Prostate gland (tissue), 2 donors: ENCODE measurements at regions of chr16 and their contacts with region 1.

Region 1: DNA sequence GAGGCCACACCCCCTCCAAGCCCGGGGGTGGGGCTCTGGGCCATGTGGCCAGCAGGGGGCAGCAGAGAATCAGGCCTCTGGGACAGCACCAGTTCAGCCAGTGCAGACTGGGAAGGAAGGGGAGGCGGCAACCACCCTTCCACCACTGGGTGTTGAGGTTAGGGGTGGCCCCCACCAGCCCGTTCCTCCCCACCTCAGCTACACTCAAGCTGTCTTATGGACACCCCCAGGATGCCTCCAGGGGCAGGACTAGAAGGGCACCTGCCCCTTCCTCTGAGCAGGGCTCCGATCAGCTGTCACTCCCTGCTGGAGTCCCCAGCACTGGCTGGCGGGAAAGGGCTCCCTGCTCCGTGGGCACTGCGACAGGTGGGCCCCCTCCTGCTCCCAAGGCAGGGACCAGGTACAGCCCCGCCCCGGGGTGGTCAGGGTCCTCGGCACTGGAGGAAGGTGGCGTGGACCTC is 21.8 kb downstream of the KATNB1 start:
- DNase-seq: peak; percentile 82
- H3K4me3 ChIP-seq: no peak overlapping the region
- H3K27ac ChIP-seq: no peak overlapping the region
- H3K4me1 ChIP-seq: no peaks in the 10 kb centered on the region
- H3K27me3 ChIP-seq: no peaks in the 10 kb centered on the region
- CTCF ChIP-seq: peak; percentile 76 to 96 (median 90)
- POLR2A ChIP-seq: no peak

Region 2: DNA sequence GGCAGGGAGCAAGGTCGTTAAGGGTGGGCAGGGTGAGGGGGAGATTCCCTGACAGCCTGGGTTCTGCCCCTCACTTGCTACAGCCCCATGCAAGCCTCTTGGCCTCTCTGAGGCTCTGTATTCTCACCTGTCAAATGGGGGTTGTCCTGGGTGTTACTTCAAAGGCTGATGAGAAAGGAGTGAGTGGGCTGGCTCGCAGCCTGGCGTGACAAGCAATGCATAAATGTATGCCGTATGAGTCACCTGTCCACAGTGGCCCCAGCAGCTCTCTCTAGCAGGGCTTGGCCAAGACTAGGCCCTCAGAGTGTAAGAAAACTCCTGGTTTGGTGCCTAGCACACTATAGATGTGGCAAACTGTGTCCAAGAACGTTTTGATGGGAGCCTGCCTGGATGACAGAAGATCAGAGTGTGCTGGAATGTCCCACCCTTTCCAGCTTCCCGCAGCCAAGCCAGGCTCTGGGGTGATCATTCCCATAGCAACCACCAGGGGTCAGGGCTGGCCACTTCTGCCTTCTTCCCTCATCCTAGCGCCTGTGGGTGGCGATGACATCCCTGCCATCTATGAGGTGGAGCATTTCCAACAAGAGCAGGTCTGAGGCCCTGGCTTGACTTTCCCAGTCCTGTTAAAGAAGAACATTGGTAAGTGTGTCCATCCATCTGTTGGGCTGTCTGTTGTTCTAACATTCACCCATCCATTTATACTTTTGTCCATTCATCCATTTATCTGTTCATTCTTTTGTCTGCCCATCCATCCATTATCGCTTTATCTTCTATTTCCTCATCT is 166.1 kb before region 1 on chr16:
- intact Hi-C with region 1: loop called (anchors 10 kb)
- DNase-seq: peak; percentile 59
- H3K4me3 ChIP-seq: no peak overlapping the region
- H3K27ac ChIP-seq: no peak overlapping the region
- H3K4me1 ChIP-seq: no peaks in the 10 kb centered on the region
- H3K27me3 ChIP-seq: no peaks in the 10 kb centered on the region
- CTCF ChIP-seq: peak; percentile 47 to 93 (median 84)
- POLR2A ChIP-seq: no peak

Region 3: DNA sequence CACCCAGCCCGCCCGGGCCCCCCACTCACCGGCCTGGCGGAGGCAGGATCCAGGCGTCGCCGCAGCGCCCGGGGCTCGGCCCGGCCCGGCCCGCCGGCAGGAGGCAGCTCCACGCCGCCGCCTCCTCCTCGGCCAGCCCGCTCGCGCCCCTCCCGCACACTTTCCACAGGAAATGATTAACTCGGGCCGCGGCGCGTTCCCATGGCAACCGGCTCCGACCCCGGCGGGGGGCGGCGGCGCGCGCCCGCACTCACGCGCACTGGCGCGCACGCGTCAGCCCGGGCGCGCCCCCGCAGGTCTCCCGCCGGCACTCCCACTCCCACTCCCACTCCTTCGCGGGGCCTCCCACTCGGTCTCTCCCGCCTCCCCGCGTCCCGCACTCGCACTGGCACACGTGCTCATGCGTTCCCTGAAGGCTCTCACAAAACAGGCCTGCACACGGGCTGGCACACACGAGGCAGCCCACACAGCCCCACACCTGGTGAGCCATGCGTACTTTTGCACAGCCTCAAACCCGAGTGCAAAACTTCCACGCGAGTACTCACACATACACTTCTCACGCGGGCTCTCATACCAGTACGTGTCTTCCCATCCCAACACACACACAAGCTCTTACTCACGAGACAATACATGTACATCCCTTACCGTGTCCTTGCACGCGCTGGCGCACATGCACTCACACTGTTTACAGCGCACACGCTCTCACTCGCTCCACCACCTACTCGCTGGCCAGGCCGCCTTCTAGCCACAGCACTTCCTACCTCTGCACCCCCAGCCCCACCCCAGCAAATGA is 45.2 kb after region 1 on chr16 and contains the start of gene KIFC3:
- intact Hi-C with region 1: loop called (anchors 5 kb)
- DNase-seq: peak; percentile 52
- H3K4me3 ChIP-seq: peak within 1 kb of the TSS; percentile 43 to 47
- H3K27ac ChIP-seq: peak within 1 kb of the TSS; percentile 75 to 77
- H3K4me1 ChIP-seq: no peaks in the 10 kb centered on the region
- H3K27me3 ChIP-seq: no peaks in the 10 kb centered on the region
- CTCF ChIP-seq: peak in 2 of 4 experiments; percentile 27 to 55
- POLR2A ChIP-seq: no peak
- total RNA-seq, gene KIFC3: 16.3 to 79.5 TPM

Region 4: DNA sequence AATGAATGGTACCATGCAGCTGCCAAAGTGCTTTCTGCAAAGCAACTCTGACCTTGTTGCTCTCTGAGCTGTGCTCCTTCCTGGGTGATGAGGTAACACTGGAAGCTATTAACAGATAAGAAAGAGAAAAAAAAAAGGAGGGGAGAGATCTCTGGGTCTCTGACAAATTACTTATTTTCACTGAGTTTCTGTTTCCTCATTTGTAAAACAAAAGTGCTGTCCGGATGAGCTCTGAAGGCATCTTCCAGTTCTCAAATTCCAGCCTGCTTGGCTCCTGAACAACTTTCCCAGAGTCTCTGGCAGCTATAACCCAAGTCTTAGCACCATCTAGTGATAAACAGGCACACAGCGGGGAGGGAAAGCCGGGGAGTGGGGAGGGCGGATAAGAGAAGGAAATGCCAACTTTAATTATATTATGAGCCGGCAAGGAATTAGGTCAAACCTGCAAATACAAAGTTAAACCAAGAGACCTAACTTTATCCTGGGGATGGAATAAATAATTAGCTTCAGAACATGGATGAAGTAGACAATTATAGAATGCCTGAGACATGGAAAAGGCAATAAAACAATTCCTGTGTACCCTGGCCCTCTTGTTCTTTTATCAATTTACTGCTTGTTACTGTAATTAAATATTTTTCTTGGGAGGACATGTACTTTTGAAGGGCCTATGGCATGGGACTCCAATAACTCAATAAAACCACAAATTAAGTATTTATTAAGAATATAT is 106.2 kb after region 1 on chr16:
- intact Hi-C with region 1: loop called (anchors 1 kb)
- DNase-seq: peak; percentile 63
- H3K4me3 ChIP-seq: no peak overlapping the region
- H3K27ac ChIP-seq: no peak overlapping the region
- H3K4me1 ChIP-seq: no peaks in the 10 kb centered on the region
- H3K27me3 ChIP-seq: no peaks in the 10 kb centered on the region
- CTCF ChIP-seq: peak in 3 of 4 experiments; percentile 33 to 66 (median 61)
- POLR2A ChIP-seq: no peak

Region 5: DNA sequence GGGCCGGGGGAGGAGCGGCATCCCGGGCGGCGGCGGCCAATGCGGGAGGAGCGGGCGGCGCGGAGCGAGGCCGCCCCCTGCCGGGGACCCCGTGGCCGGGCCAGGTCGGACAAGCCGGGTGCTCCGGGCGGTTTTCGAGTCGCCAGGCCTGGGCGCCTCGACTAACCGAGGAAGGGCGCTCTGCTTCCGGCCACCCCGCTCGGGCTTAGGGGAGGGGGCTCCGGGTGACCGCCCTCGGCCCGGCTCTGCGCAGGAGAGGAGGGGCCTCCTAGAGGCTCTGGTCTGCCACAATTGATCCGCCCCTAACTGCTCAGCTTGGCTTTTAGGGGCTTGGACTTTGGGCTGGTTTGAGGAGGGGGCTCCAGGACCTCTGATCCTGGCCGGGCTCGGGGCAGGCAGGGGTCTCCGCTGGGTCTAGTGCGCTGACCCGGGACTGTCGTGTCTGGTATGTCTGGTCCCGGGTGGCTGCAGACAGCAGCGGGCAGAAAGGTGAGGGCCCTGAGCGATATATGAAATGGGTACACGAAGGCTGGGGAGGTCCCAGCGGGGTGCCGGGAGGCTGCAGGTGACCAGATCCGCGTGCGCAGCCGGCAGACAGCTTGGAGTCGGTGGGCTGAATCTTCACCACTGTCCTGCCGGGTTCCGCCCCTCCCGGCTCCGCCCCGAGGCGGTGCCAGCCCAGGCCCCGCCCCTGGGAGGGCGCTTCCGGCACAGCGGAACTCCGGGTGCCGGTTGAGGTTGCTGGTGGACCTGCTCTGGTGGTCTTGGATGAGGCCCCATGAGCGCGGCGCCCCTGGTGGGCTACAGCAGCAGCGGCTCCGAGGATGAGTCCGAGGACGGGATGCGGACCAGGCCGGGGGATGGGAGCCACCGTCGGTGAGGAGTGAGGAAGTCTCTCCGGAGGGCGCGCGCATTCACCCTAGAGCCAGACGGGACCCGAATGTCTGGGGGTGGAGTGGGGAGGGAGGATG is 243.6 kb after region 1 on chr16 and contains the start of gene USB1:
- intact Hi-C with region 1: loop called (anchors 5 kb)
- DNase-seq: peak; percentile 83
- H3K4me3 ChIP-seq: peak within 1 kb of the TSS; percentile 71 to 82
- H3K27ac ChIP-seq: peak within 1 kb of the TSS; percentile 75 to 79
- H3K4me1 ChIP-seq: peaks cover 10% of the 10 kb centered on the region
- H3K27me3 ChIP-seq: no peaks in the 10 kb centered on the region
- CTCF ChIP-seq: peak; percentile 73 to 83 (median 80)
- POLR2A ChIP-seq: peak; percentile 65
- total RNA-seq, gene USB1: 22.6 to 74.1 TPM